Activated CD4-positive, alpha-beta T cell treated with anti-CD3 and anti-CD28 coated beads, Interleukin-2, amount 10 ng/mL, durations not matched to agents 7 days and 5 days (primary cell): ENCODE measurements at regions of chr11 and their contacts with region 1.

Region 1: DNA sequence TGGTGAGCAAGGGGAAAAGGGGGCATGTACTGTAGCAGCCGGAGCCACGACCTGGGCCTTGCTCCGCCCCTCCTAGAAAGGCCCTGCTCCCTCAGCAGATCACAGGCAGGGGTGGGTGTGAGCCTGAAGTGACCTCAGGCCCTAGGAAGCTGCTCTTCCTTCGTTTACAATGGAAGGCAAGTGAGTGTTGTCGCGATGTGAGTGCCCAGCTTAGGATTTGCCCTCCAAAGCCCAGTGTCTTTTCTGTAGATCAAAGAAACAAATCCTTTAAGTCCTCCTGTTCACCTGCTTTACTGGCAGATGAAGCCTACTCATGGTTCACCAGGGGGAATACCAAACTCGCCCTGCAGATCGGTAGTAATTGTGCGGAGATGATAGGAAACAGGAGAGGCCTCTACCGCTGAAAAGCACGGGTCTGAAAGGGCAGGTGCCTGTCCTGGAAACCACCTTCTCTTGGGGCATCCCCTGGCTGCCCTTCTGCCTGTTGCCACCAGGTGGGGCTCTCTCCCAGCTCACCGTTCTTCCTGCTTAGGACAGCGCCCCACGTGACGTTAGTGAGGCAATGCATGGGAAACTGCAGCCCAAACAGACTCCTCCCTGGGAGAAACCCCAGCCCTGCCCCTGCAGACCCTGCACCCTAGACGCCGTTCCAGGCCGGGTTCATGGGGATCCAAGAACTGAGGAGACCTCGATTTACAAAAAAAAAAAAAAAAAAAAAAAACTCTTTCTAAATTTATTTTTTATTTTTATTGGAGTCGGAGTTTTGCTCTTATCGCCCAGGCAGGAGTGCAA is 45.9 kb upstream of the RAB1B start:
- DNase-seq: peak; percentile 94
- H3K4me3 Mint-ChIP-seq: no peak overlapping the region
- H3K27ac Mint-ChIP-seq: peak overlapping the region; percentile 81
- H3K4me1 Mint-ChIP-seq: peaks cover 25% of the 10 kb centered on the region
- H3K27me3 Mint-ChIP-seq: no peaks in the 10 kb centered on the region

Region 2: GRCh38 chr11:66232769-66233168 is 10.2 kb after region 1 on chr11:
- CTCF ChIA-PET with region 1: interaction called, 19 read pairs
- POLR2A ChIA-PET with region 1: no interaction called
- DNase-seq: no peak
- H3K4me3 Mint-ChIP-seq: no peak overlapping the region
- H3K27ac Mint-ChIP-seq: peak overlapping the region; percentile 41
- H3K4me1 Mint-ChIP-seq: no peaks in the 10 kb centered on the region
- H3K27me3 Mint-ChIP-seq: no peaks in the 10 kb centered on the region

Region 3: DNA sequence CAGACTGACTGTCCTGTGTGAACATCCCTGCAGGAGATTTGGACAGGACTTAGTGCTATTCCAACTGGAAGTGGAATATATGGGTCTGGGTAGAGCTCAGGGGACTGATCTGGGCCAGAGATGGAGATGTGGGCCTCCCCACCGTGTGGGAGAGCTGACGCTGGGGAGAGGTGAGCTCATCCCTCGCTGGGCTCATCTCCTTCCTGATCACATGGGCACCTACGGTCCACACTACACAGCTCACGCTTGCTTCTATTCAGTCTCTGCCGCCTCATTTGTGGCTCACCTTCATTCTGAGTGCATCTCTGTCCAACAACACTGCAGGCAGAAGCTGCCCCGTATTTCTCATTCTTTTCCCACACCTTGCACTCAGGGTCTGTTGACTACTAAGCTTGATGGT is 29.3 kb after region 1 on chr11:
- CTCF ChIA-PET with region 1: interaction called, 19 read pairs
- POLR2A ChIA-PET with region 1: no interaction called
- DNase-seq: no peak
- H3K4me3 Mint-ChIP-seq: no peak overlapping the region
- H3K27ac Mint-ChIP-seq: no peak overlapping the region
- H3K4me1 Mint-ChIP-seq: peaks cover 25% of the 10 kb centered on the region
- H3K27me3 Mint-ChIP-seq: no peaks in the 10 kb centered on the region

Region 4: GRCh38 chr11:66282468-66283386 is 60.2 kb after region 1 on chr11:
- CTCF ChIA-PET with region 1: interaction called, 35 read pairs
- POLR2A ChIA-PET with region 1: no interaction called
- DNase-seq: peak; percentile 100
- H3K4me3 Mint-ChIP-seq: peak overlapping the region; percentile 56
- H3K27ac Mint-ChIP-seq: peak overlapping the region; percentile 66
- H3K4me1 Mint-ChIP-seq: peaks cover 39% of the 10 kb centered on the region
- H3K27me3 Mint-ChIP-seq: peaks cover 3% of the 10 kb centered on the region